CD14-positive monocyte (primary cell): ENCODE measurements at regions of chr7 and their contacts with region 1.

Region 1: GRCh38 chr7:139602143-139602722 is 78.7 kb downstream of the CLEC2L start:
- DNase-seq: peak; percentile 7 to 20 (median 14)
- H3K4me3 ChIP-seq: no peak overlapping the region
- H3K4me3 Mint-ChIP-seq: no peak overlapping the region
- H3K27ac ChIP-seq: no peak overlapping the region
- H3K27ac Mint-ChIP-seq: no peak overlapping the region
- H3K4me1 ChIP-seq: no peaks in the 10 kb centered on the region
- H3K4me1 Mint-ChIP-seq: no peaks in the 10 kb centered on the region
- H3K27me3 ChIP-seq: no peaks in the 10 kb centered on the region
- H3K27me3 Mint-ChIP-seq: no peaks in the 10 kb centered on the region
- CTCF ChIP-seq: peak; percentile 68

Region 2: GRCh38 chr7:139118234-139118804 is 483.9 kb before region 1 on chr7:
- intact Hi-C with region 1: no loop called
- DNase-seq: peak; percentile 36 to 89 (median 74)
- H3K4me3 ChIP-seq: peak overlapping the region; percentile 13 to 70 (median 67)
- H3K4me3 Mint-ChIP-seq: peak overlapping the region; percentile 63 to 94
- H3K27ac ChIP-seq: peak overlapping the region; percentile 43 to 71
- H3K27ac Mint-ChIP-seq: peak overlapping the region; percentile 42 to 93 (median 89)
- H3K4me1 ChIP-seq: peaks cover 23 to 28% of the 10 kb centered on the region in 2 donors
- H3K4me1 Mint-ChIP-seq: peaks cover 27% of the 10 kb centered on the region
- H3K27me3 ChIP-seq: no peaks in the 10 kb centered on the region
- H3K27me3 Mint-ChIP-seq: peaks cover 0 to 10% (median 3%) of the 10 kb centered on the region in 3 donors
- CTCF ChIP-seq: no peak

Region 3: DNA sequence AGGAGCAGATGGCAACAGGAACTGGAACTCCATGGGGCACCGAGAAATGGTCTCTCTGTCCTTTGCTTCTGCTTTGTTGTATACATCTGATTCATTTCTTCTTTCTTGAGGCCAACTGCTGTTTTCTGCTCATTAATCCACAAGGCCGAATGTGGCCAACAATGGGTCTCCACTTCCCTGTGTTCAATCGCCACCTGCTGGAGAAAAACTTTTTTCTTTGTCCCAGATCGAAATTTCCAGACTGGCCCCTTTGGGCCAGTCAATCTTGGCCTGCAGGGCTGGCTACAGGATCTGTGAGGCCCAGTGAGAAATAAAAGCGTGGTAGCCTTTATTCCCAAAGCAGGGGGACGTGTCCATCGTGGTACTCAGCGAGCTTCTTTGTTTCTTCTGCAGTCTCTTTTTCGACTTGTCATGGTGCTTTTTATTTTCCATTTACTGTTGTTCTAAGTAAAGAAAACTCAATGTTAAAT is 401.7 kb after region 1 on chr7:
- intact Hi-C with region 1: loop called (anchors 5 kb)
- DNase-seq: peak; percentile 21 to 41 (median 34)
- H3K4me3 ChIP-seq: no peak overlapping the region
- H3K4me3 Mint-ChIP-seq: no peak overlapping the region
- H3K27ac ChIP-seq: no peak overlapping the region
- H3K27ac Mint-ChIP-seq: peak overlapping the region in 3 of 7 donors; percentile 1 to 71 (median 32)
- H3K4me1 ChIP-seq: no peaks in the 10 kb centered on the region
- H3K4me1 Mint-ChIP-seq: peaks cover 4% of the 10 kb centered on the region
- H3K27me3 ChIP-seq: no peaks in the 10 kb centered on the region
- H3K27me3 Mint-ChIP-seq: peaks cover 0 to 3% (median 3%) of the 10 kb centered on the region in 3 donors
- CTCF ChIP-seq: peak; percentile 70

Region 4: DNA sequence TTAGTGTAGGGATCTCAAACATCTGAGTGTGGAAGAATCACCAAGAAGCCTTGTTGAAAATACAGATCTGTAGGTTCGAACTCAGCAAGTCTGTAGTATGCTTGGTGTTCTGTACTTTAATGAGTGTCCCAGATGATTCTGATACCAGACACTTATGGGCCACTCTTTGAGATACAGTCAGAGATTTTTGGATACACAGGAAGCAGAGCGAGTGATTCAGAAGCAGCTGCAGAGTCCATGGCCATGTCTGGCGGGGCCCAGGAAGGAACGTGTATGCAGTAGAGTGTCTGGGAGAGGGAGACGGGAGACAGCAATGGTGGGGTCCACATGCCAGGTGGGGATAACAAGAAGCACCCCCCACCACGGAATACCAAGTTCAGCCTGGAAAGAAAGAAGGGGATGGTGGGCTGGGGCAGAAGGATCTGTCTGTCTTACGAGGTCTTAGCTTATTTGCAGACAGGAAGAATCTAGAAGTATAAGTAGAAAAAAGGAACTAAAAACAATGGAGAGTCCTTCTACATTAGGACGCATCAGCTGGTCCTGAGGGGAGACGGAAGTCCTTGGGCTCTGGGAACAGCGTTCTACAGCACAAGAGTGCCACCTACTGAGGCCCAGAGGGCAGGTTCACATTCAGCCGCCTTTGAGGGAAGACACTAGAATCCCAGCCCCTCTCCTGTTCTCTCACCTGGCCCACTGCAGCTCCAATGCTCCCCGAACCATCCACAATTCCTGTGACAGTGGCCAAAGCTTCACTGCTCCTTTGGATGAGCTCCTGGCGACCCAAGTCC is 740.7 kb after region 1 on chr7:
- intact Hi-C with region 1: loop called in 1 of 2 experiments (anchors 10 kb)
- DNase-seq: peak; percentile 80 to 88 (median 88)
- H3K4me3 ChIP-seq: no peak overlapping the region
- H3K4me3 Mint-ChIP-seq: peak overlapping the region; percentile 59 to 61
- H3K27ac ChIP-seq: peak overlapping the region in 1 of 2 donors; percentile 69
- H3K27ac Mint-ChIP-seq: peak overlapping the region; percentile 66 to 92 (median 85)
- H3K4me1 ChIP-seq: peaks cover 6% of the 10 kb centered on the region in 2 donors
- H3K4me1 Mint-ChIP-seq: peaks cover 13% of the 10 kb centered on the region
- H3K27me3 ChIP-seq: no peaks in the 10 kb centered on the region
- H3K27me3 Mint-ChIP-seq: peaks cover 0 to 2% (median 0%) of the 10 kb centered on the region in 3 donors
- CTCF ChIP-seq: peak; percentile 88